Activated T-helper 1 cell treated with anti-CD3 and anti-CD28 coated beads, Interleukin-12 subunit alpha, Interleukin-12 subunit beta, Interleukin-2, Interleukin-4 antibody, amounts not matched to agents 30 ng/mL and 10 ng/mL and 1 ng/mL, durations not matched to agents 14 hours and 24 hours and 36 hours (primary cell): ENCODE measurements at regions of chr15 and their contacts with region 1.

Region 1: GRCh38 chr15:81323944-81324881 is at the start of gene STARD5:
- DNase-seq: peak; percentile 98
- H3K4me3 Mint-ChIP-seq: peak within 1 kb of the TSS; percentile 98
- H3K27ac Mint-ChIP-seq: peak within 1 kb of the TSS; percentile 76
- H3K4me1 Mint-ChIP-seq: peaks cover 38% of the 10 kb centered on the region
- H3K27me3 Mint-ChIP-seq: no peaks in the 10 kb centered on the region
- total RNA-seq, gene STARD5: 4.5 and 4.6 TPM in 2 replicates

Region 2: DNA sequence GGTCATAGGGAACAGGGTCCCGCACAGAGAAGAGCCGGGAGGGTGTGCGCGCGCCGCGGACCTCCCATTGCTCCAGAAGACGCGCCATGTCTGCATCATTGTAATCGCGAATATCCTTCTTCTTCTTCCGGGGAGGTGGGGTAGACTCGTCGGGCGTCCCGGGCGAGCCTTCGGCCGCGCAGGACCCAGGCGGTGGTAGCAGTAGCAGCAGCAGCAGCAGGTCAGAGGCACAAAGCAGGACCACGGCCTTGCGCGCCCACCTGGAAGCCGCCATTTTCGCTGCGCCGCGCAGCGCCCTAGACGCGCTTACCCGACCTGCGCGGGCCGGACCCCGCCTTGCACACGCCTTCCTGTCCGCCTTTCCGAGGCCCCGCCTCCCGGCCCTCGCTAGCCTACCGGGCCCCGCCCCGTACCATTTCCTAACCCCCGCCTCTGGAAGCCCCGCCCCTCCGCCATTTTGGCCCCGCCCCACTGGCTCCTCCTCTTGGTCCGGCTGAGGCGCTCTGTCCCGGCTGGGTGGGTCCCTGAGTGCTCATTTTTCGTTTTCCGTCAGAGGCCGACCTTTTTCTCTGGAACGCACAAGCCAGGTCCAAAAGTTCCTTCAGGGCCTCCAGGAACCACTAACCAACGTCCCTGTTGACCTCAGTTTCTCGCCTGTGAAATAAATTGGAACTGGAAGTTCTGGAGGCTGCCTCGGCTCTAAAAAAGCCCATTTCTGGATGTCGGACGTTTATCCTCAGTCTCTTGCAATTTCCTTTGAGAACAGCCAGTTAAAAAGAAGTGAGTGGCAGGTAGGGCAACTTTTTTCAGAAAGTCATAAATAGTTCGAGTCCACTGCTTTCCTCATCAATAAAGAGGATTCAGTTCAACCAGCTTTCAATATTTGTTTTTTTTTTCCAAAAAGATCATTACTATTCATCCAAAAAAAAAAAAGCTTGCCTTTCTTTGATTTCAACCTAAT is 334.4 kb before region 1 on chr15 and contains the start of gene MESD:
- intact Hi-C with region 1: loop called (anchors 1 kb)
- DNase-seq: peak; percentile 92
- H3K4me3 Mint-ChIP-seq: peak within 1 kb of the TSS; percentile 98
- H3K27ac Mint-ChIP-seq: peak within 1 kb of the TSS; percentile 97
- H3K4me1 Mint-ChIP-seq: peaks cover 58% of the 10 kb centered on the region
- H3K27me3 Mint-ChIP-seq: no peaks in the 10 kb centered on the region
- total RNA-seq, gene MESD: 29.5 and 30.2 TPM in 2 replicates

Region 3: DNA sequence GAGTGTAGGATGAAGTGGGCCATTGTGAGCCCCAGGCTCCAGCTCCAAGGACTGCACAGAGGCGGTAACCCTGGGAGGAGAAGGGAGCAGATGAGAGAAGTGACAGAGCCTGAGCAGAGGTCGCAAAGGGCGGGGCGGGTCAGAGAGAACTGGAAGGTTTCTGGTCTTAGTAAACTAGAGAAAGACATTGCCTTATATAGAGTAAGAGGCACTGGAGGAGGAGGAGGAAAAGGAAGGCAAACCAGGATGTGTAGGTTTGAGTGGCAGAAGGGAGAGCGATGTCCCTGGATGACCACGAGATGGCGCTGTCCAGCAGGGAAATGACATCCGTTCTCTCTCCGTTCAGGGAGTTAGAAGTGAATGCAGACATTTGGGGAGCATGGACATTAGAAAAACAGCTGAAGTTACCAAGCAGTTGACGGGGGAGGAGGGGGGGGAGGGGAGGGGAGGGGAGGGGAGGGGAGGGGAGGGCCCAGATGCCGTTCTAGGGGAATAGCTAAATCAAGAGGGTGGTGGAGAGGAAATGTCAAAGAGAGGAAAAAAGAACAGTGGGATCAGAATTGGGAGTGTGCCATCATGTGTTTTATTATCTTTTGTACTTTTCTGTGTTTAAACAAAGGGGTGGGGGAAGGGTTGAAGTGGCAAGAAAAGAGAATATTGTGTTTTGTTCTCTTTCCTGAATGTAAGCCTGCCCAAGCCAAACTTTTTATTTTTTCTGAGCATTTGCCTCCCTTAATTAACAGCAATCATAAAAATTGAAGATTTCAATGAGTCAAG is 49.1 kb before region 1 on chr15:
- intact Hi-C with region 1: loop called (anchors 1 kb)
- DNase-seq: peak; percentile 75
- H3K4me3 Mint-ChIP-seq: peak overlapping the region; percentile 0
- H3K27ac Mint-ChIP-seq: peak overlapping the region; percentile 37
- H3K4me1 Mint-ChIP-seq: peaks cover 40% of the 10 kb centered on the region
- H3K27me3 Mint-ChIP-seq: peaks cover under 1% of the 10 kb centered on the region

Region 4: GRCh38 chr15:81301815-81302399 is 22.3 kb before region 1 on chr15:
- intact Hi-C with region 1: loop called (anchors 1 kb)
- DNase-seq: peak; percentile 50
- H3K4me3 Mint-ChIP-seq: peak overlapping the region; percentile 97
- H3K27ac Mint-ChIP-seq: peak overlapping the region; percentile 87
- H3K4me1 Mint-ChIP-seq: peaks cover 96% of the 10 kb centered on the region
- H3K27me3 Mint-ChIP-seq: no peaks in the 10 kb centered on the region

Region 5: DNA sequence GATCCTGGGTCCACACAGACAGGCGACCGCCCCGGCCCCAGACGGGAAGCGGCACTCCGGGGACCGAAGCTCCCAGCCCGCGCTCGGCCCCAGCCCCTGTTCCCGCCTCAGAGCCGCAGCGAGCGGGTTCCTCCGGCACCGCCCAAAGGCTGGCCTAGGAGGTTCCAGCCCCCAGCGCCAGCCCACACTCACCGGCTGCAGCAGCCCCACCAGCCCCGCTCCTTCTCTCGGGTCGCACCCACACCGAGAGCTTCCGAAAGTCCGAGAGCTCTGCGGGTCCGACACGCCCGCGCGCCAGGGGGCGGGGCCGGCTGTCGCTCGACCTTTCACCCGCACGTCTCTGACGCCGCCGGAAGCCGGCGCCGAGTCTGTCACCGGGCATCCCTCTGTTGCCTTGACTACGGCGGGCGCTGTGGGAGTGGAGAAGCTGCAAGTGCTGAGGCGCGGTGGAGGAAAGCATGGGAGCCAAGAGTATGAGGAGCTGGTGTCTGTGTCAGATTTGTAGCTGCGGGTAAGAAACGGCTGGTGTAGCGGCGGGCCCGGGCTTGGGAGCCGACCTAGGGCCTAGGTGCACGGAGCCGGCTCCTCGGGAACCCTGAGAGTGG is 938.3 kb after region 1 on chr15 and contains the starts of genes EFL1 and SAXO2:
- intact Hi-C with region 1: loop called (anchors 5 kb)
- DNase-seq: peak; percentile 91
- H3K4me3 Mint-ChIP-seq: peak within 1 kb of the TSS; percentile 96
- H3K27ac Mint-ChIP-seq: peak within 1 kb of the TSS; percentile 95
- H3K4me1 Mint-ChIP-seq: peaks cover 27% of the 10 kb centered on the region
- H3K27me3 Mint-ChIP-seq: no peaks in the 10 kb centered on the region
- total RNA-seq, gene EFL1: 25.2 and 25.6 TPM in 2 replicates
- total RNA-seq, gene SAXO2: 0.54 and 0.57 TPM in 2 replicates